Naive thymus-derived CD4-positive, alpha-beta T cell (primary cell): ENCODE measurements at regions of chr4 and their contacts with region 1.

Region 1: DNA sequence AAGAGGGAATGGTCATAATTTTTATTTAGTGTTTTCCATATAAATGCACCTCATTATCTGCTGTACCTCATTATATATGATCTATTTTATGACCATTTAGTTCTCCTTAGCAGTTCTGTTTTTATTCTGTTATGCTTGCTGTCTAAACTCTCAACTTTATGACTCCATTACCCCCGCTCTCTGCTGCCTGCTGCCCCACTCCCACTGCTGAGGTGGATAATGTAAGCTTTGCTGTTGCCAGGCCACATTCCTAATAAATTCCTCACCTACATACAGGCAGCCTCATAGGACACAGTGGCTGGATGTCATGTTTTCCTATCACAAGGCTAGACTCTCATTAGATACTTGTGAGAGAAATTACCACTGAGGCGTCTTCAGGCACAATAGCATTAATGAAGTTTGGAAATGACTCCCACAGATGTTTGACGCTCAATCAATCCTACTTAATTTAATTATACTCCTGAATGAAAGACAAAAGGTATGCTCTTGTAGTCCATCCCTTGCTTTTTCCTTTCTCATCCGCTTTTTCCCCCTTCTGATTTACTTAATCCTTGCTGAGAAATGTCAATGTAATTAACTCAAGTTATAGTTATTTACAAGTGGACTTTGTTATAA is 497.5 kb upstream of the IGFBP7 start:
- DNase-seq: no peak
- ATAC-seq: no peak
- H3K4me3 ChIP-seq: no peak overlapping the region
- H3K4me3 Mint-ChIP-seq: no peak overlapping the region
- H3K27ac ChIP-seq: no peak overlapping the region
- H3K27ac Mint-ChIP-seq: no peak overlapping the region
- H3K4me1 ChIP-seq: no peaks in the 10 kb centered on the region
- H3K4me1 Mint-ChIP-seq: peaks cover 0 to 2% (median 0%) of the 10 kb centered on the region in 7 donors
- H3K27me3 ChIP-seq: no peaks in the 10 kb centered on the region
- H3K27me3 Mint-ChIP-seq: no peaks in the 10 kb centered on the region

Region 2: DNA sequence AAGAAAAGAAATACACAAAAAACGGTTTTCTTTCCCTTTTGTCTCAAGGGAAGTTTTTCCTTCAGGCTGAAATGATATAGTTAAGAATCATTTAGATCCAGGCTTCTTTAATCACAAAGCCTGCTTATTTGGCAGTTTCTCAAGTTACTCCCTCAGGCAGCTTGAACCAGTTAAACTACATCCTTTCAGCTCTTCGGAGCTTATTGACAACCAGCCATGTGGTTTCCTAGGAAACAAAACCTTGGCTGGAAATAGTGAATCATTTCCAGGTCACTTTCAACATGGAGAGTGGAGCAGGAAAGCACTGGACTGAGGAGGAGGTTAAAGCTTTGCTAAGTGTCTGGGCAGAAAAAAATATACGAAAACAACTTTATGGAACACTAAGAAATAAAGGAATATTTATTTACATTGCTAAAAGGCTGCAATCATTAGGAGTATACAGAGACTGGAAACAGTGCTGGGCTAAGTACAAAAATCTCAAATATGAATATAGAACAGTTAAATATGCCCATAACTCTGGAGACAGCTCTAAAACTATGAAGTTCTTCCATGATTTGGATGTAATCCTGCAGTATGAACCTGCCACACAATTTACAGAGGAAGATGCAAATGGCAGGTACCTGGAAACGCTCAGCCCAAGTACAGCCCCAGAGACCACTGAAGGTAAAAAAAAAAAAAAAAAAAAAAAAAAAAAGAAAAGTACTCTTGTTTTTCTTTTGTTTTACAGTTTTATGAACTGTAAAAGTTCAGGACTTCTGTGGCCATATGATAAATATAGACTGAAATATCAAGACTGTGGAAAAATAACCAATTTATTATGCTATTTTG is 1197.2 kb before region 1 on chr4:
- CTCF ChIA-PET with region 1: no interaction called
- POLR2A ChIA-PET with region 1: no interaction called
- intact Hi-C with region 1: no loop called
- DNase-seq: no peak
- ATAC-seq: no peak
- H3K4me3 ChIP-seq: no peak overlapping the region
- H3K4me3 Mint-ChIP-seq: no peak overlapping the region
- H3K27ac ChIP-seq: no peak overlapping the region
- H3K27ac Mint-ChIP-seq: peak overlapping the region in 2 of 9 donors; percentile 20 to 43
- H3K4me1 ChIP-seq: no peaks in the 10 kb centered on the region
- H3K4me1 Mint-ChIP-seq: peaks cover 6 to 27% (median 21%) of the 10 kb centered on the region in 7 donors
- H3K27me3 ChIP-seq: no peaks in the 10 kb centered on the region
- H3K27me3 Mint-ChIP-seq: no peaks in the 10 kb centered on the region

Region 3: DNA sequence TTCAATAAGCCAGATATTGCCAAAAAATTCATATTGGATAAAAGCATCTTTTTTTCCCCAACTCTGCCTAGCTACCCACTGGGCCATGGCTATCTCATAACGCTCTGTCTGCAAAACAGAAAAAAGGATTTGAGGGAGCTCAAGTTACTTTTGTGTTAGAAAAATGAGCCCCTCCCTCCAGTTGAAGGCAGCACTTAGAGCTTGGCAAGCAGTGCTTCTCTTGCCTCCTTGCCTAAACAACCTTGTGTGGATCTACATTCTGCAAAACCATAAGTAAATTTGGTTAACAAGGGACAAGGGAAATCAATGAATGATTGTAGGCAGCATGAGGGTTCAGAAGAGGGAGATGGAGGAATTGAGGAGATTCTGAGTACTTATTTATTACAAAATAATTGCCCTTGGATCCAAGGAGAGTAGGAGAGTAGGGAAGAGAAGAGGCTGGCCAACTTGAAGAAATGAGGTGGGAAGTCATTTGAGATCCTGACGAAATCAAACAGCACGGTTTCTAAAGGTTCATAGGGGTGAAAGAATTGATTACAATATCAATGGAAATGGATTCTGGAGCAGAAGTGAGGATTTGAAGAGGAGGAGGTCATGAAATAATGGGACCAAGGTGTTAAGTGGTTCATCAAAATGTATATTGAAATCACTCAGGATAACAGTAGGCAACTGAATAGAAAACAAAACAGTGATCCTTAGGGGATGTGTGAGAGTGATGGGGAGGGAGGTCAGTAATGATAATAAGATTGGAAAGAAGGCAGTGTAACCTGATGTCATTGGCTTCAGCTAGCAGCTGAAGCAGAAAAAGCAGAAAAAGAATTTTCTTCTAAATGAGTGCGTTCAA is 62.6 kb before region 1 on chr4:
- CTCF ChIA-PET with region 1: no interaction called
- POLR2A ChIA-PET with region 1: no interaction called
- intact Hi-C with region 1: no loop called
- DNase-seq: no peak
- ATAC-seq: no peak
- H3K4me3 ChIP-seq: no peak overlapping the region
- H3K4me3 Mint-ChIP-seq: no peak overlapping the region
- H3K27ac ChIP-seq: no peak overlapping the region
- H3K27ac Mint-ChIP-seq: no peak overlapping the region
- H3K4me1 ChIP-seq: no peaks in the 10 kb centered on the region
- H3K4me1 Mint-ChIP-seq: no peaks in the 10 kb centered on the region
- H3K27me3 ChIP-seq: no peaks in the 10 kb centered on the region
- H3K27me3 Mint-ChIP-seq: no peaks in the 10 kb centered on the region

Region 4: GRCh38 chr4:57661517-57662090 is 53.9 kb after region 1 on chr4:
- CTCF ChIA-PET with region 1: no interaction called
- POLR2A ChIA-PET with region 1: no interaction called
- intact Hi-C with region 1: loop called in 1 of 2 experiments (anchors 2 kb)
- DNase-seq: no peak
- ATAC-seq: no peak
- H3K4me3 ChIP-seq: no peak overlapping the region
- H3K4me3 Mint-ChIP-seq: no peak overlapping the region
- H3K27ac ChIP-seq: no peak overlapping the region
- H3K27ac Mint-ChIP-seq: no peak overlapping the region
- H3K4me1 ChIP-seq: no peaks in the 10 kb centered on the region
- H3K4me1 Mint-ChIP-seq: no peaks in the 10 kb centered on the region
- H3K27me3 ChIP-seq: no peaks in the 10 kb centered on the region
- H3K27me3 Mint-ChIP-seq: no peaks in the 10 kb centered on the region